ENCODE measurements at regions of chr1 and their contacts with region 1.

Region 1: DNA sequence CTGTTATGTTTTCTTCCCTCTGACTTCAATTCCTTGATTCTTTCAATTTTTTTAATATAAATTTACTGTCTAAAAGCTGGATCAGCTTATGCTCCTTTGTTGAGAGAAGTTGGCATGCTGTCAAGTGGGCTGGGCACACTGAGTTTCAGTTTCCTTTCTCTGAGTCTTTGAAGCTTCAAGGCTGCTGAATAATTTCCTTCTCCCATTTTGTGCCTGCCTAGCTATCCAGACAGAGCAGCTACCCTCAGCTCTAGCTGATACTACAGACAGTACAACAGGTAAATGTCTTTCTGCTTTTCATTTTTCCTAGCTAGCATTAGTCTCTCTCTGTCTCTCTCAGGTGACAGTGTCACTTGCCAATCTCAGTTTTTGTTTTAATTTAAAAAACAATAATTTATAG is at the start of gene IFI44:
- DNase-seq: peak; percentile 61
- ATAC-seq: peak; percentile 74
- H3K4me3 ChIP-seq: peak within 1 kb of the TSS in 4 of 5 experiments; percentile 28 to 58 (median 52)
- H3K4me3 Mint-ChIP-seq: peak within 1 kb of the TSS; percentile 72
- H3K27ac ChIP-seq: peak within 1 kb of the TSS in 1 of 2 donors; percentile 51
- H3K27ac Mint-ChIP-seq: no peak within 1 kb of the TSS
- H3K4me1 ChIP-seq: peaks cover 8 to 18% of the 10 kb centered on the region in 2 donors
- H3K4me1 Mint-ChIP-seq: peaks cover 25% of the 10 kb centered on the region
- H3K27me3 ChIP-seq: no peaks in the 10 kb centered on the region
- H3K27me3 Mint-ChIP-seq: no peaks in the 10 kb centered on the region
- CTCF ChIP-seq: no peak
- total RNA-seq, gene IFI44: 6.9 and 10.2 TPM in 2 replicates

Region 2: DNA sequence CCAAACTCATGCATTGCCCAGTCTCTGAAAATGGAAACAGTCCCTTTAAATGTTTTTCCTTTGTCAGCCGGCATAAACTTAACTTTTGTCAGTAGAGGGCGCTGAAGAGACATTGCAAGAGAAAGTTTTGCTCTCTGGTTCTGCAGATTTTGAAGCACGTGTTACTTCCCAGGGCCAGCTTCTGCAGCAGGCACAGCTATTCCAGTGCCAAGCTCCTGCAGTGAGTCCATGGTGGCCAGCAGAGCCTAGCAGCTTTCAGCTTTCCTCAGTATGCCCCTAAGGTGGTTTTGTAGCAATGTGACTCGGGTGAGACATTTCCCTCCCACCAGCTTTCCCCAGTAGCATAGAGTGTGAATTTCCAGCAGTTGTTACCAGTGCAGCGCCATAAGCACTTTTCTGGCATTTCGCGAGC is 32.0 kb before region 1 on chr1:
- CTCF ChIA-PET with region 1: interaction called, 4 read pairs
- POLR2A ChIA-PET with region 1: no interaction called
- intact Hi-C with region 1: loop called (anchors 5 kb)
- DNase-seq: peak; percentile 78
- ATAC-seq: peak; percentile 63
- H3K4me3 ChIP-seq: no peak overlapping the region
- H3K4me3 Mint-ChIP-seq: peak overlapping the region; percentile 27
- H3K27ac ChIP-seq: no peak overlapping the region
- H3K27ac Mint-ChIP-seq: no peak overlapping the region
- H3K4me1 ChIP-seq: peaks cover 18 to 24% of the 10 kb centered on the region in 2 donors
- H3K4me1 Mint-ChIP-seq: peaks cover 36% of the 10 kb centered on the region
- H3K27me3 ChIP-seq: no peaks in the 10 kb centered on the region
- H3K27me3 Mint-ChIP-seq: no peaks in the 10 kb centered on the region
- CTCF ChIP-seq: peak; percentile 86

Region 3: DNA sequence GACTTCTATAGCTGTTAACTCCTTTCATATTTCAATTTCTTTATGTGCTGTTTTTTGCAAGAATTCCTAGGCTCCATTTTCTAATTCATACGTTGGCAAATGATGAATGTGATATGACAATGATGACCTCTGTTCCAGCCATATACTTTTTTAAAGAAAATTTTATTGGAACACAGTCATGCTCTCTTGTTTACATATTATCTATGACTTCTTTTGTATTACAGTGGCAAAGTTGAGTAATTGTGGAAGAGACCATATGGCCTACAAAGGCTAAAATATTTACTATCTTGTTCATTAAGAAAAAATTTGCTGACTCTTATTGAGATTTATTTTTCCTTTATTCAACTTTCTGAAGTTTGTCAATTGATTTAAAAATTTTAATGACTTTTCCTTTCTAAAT is 22.3 kb before region 1 on chr1:
- CTCF ChIA-PET with region 1: interaction called, 3 read pairs
- POLR2A ChIA-PET with region 1: no interaction called
- intact Hi-C with region 1: loop called (anchors 2 kb)
- DNase-seq: no peak
- ATAC-seq: no peak
- H3K4me3 ChIP-seq: no peak overlapping the region
- H3K4me3 Mint-ChIP-seq: no peak overlapping the region
- H3K27ac ChIP-seq: no peak overlapping the region
- H3K27ac Mint-ChIP-seq: no peak overlapping the region
- H3K4me1 ChIP-seq: peaks cover 4 to 11% of the 10 kb centered on the region in 2 donors
- H3K4me1 Mint-ChIP-seq: peaks cover 21% of the 10 kb centered on the region
- H3K27me3 ChIP-seq: no peaks in the 10 kb centered on the region
- H3K27me3 Mint-ChIP-seq: no peaks in the 10 kb centered on the region
- CTCF ChIP-seq: no peak

Measured in B cell (primary cell).